ENCODE measurements at regions of chr12 and their contacts with region 1.

Region 1: GRCh38 chr12:110379631-110380030 is 23.9 kb downstream of the ANAPC7 start:
- DNase-seq: no peak
- H3K4me3 ChIP-seq: no peak overlapping the region
- H3K27ac ChIP-seq: no peak overlapping the region
- H3K4me1 ChIP-seq: no peaks in the 10 kb centered on the region
- H3K27me3 ChIP-seq: no peaks in the 10 kb centered on the region
- CTCF ChIP-seq: no peak

Region 2: DNA sequence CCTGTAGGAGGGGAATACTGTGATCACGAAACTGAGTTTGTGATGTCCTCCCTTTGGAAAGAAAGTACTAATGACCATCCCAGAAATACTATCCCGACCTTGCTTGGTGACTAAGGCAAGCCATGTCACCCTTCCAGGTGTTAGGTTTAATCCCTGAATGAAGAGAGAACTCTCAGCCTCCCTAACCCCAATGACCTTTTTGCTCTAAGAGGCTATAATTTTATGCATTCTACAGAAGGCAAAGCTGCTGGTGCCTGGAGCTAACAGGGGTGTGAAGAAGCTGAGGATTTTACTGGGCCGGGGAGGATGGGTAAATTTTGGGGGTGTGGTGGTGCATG is 323.5 kb before region 1 on chr12:
- CTCF ChIA-PET with region 1: no interaction called
- dilution Hi-C with region 1: loop called (anchors 10 kb)
- in situ Hi-C with region 1: no loop called
- intact Hi-C with region 1: no loop called
- DNase-seq: no peak
- H3K4me3 ChIP-seq: no peak overlapping the region
- H3K27ac ChIP-seq: peak overlapping the region; percentile 5
- H3K4me1 ChIP-seq: peaks cover 10% of the 10 kb centered on the region
- H3K27me3 ChIP-seq: no peaks in the 10 kb centered on the region
- CTCF ChIP-seq: no peak

Region 3: DNA sequence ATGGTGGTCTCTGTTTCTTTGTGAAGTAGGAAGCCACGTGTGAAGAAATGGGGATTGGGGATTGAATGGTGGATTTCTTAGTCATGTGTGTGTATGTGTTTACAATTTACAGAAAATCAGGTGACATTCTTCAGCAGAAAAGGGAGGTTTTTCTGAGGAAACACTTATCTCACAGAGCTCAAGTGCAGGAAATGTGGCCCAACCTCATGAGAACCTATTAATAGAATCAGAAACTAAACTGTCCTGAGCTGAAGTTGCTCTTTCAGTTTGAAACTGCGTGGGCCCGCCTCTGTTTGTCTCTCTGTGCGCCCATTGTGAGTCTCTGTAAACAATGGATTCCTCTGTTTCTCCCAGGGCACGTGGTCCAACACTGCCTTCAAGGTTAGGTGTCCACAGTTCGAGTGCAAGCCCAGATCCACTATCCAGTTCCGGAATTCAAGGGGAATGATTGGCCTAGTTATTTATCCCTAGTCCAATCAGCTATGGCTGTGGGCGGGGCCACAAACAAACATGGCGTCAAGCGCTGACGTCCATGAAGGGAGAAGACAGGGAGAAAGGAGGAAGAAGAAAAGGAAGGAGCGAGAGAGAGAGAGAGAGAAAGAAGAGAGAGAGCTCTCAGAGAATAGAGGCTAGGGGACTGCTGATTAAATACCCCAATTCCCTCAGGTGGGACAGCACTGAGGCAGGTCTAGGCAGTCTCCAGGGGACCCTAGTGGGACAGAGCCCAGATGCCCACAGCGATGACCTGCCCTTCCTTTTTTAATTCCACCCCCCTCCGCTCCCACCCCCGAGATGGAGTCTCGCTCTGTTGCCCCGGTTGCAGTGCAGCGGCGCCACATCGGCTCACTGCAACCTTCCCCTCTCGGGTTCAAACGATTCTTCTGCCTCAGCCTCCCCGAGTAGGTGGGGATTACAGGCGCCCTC is 299.9 kb before region 1 on chr12:
- CTCF ChIA-PET with region 1: no interaction called
- dilution Hi-C with region 1: loop called (anchors 10 kb)
- in situ Hi-C with region 1: no loop called
- intact Hi-C with region 1: no loop called
- DNase-seq: peak; percentile 42
- H3K4me3 ChIP-seq: no peak overlapping the region
- H3K27ac ChIP-seq: no peak overlapping the region
- H3K4me1 ChIP-seq: no peaks in the 10 kb centered on the region
- H3K27me3 ChIP-seq: no peaks in the 10 kb centered on the region
- CTCF ChIP-seq: no peak

Region 4: GRCh38 chr12:110349531-110350151 is 30.0 kb before region 1 on chr12:
- CTCF ChIA-PET with region 1: no interaction called
- dilution Hi-C with region 1: no loop called
- in situ Hi-C with region 1: no loop called
- intact Hi-C with region 1: no loop called
- DNase-seq: no peak
- H3K4me3 ChIP-seq: no peak overlapping the region
- H3K27ac ChIP-seq: no peak overlapping the region
- H3K4me1 ChIP-seq: peaks cover 16% of the 10 kb centered on the region
- H3K27me3 ChIP-seq: no peaks in the 10 kb centered on the region
- CTCF ChIP-seq: no peak

Region 5: GRCh38 chr12:110531741-110532333 is 152.2 kb after region 1 on chr12:
- CTCF ChIA-PET with region 1: no interaction called
- dilution Hi-C with region 1: loop called (anchors 10 kb)
- in situ Hi-C with region 1: no loop called
- intact Hi-C with region 1: no loop called
- DNase-seq: peak; percentile 88
- H3K4me3 ChIP-seq: no peak overlapping the region
- H3K27ac ChIP-seq: peak overlapping the region; percentile 52
- H3K4me1 ChIP-seq: peaks cover 27% of the 10 kb centered on the region
- H3K27me3 ChIP-seq: no peaks in the 10 kb centered on the region
- CTCF ChIP-seq: no peak

Region 6: DNA sequence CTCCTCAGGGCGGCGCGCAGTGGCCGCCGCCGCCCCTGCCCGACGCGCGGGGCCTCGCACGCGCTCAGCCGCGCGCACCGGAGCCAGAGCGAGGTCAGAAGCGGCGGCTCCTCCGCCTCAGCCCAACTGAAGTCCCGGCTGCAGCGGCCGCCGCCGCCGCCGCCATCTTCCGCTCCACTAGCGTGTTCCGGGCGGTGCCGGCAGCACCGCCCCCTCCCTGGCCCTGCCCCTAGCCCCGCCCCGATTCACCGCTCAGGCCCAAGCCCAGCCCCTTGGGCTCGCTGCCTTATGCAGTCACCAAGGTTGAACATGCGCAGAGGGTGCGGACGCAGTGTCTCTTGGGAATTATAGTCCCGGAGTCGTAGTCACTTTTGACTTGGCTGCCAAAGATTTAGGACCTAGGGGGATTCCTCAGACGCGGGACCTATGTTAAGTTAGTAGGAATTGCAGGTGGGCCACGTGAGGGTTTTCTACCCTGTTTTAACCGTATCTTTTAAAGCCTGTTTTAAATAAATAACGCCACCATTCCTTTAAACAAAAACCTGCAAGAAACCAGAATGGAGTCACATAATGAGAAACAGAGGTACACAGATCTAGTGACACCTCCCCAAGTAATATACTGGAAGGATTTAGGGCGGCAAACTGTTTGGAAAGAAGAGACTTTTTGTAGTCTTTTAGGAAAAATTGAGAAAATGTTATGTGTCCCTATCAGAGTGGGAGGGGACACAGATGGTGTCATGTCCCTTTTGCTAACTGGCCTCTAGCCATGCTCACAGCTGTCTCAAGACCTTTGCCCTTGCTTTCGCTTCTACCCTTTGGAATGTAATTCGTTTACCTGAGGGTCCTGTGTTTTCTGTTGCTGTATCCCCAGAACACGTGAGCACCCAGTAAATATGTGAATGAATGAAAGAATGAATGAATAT is 203.8 kb after region 1 on chr12 and contains the start of gene PPTC7:
- CTCF ChIA-PET with region 1: no interaction called
- dilution Hi-C with region 1: loop called (anchors 10 kb)
- in situ Hi-C with region 1: no loop called
- intact Hi-C with region 1: no loop called
- DNase-seq: peak; percentile 93
- H3K4me3 ChIP-seq: peak within 1 kb of the TSS; percentile 69 to 98 (median 97)
- H3K27ac ChIP-seq: peak within 1 kb of the TSS; percentile 93
- H3K4me1 ChIP-seq: peaks cover 33% of the 10 kb centered on the region
- H3K27me3 ChIP-seq: no peaks in the 10 kb centered on the region
- CTCF ChIP-seq: no peak
- total RNA-seq, gene PPTC7: 17.7 to 26.5 TPM